GM12878 (cell line): ENCODE measurements at regions of chr1 and their contacts with region 1.

Region 1: GRCh38 chr1:25549273-25550154 is 6.1 kb downstream of the LDLRAP1 start:
- DNase-seq: peak; percentile 94
- ATAC-seq: peak; percentile 95
- H3K4me3 ChIP-seq: peak overlapping the region; percentile 49; the same call in 1 of the 2 replicates
- H3K27ac ChIP-seq: peak overlapping the region; percentile 85
- H3K4me1 ChIP-seq: peaks cover 63% of the 10 kb centered on the region
- H3K27me3 ChIP-seq: no peaks in the 10 kb centered on the region
- CTCF ChIP-seq: no peak
- EP300 ChIP-seq: peak in 1 of 2 experiments; percentile 51; a peak in 1 of 4 replicates
- POLR2A ChIP-seq: peak; percentile 59
- RAD21 ChIP-seq: no peak; the same call in 1 of the 2 replicates

Region 2: DNA sequence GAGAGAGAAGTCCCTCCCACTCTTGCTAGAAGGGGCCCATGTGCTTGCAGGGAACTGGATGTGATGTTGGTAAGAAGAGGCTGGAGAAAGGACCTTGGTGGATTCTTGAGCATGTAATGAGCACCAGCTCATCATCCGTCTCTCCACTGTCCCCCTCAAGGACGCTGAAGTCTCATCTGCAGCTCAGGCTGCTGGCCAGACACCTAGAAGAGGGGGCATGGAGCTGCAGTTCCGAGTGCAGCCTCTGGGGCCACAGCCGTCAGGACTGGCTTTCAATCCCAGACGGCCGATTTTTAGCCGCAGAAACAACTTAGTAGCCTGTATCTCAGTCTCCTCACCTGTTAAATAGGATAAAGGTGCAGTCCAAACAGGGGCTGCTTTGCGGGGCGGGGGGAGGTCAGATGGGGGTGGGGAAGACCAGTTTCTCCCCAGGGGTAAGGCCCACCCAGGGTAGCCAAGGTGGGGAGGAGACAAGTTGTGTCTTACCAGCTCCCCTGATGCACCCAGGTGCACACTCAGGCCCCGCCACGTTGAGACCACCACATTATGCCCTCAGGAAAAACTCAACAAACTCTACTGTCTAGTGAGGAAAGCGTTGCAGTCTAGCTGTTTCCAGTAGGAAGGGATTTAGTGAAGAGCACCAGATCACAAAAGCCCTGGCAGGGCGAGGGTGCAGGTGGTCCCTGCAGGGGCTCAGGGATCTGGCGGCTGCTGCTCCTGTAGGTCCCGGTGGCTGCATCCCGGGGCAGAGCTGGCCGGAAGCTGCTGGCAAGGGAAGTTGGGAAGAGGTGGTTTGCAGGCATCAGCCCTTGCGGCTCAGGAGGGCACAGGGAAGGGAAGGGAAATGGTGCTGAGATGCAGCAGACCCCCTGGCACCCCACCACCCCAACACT is 23.4 kb after region 1 on chr1:
- CTCF ChIA-PET with region 1: interaction called, 12 read pairs
- POLR2A ChIA-PET with region 1: interaction called, 4 read pairs
- RAD21 ChIA-PET with region 1: interaction called, 3 read pairs
- SMC1A ChIA-PET with region 1: interaction called, 5 read pairs
- in situ Hi-C with region 1: no loop called
- intact Hi-C with region 1: no loop called
- DNase-seq: no peak
- ATAC-seq: peak; percentile 95
- H3K4me3 ChIP-seq: no peak overlapping the region
- H3K27ac ChIP-seq: no peak overlapping the region
- H3K4me1 ChIP-seq: no peaks in the 10 kb centered on the region
- H3K27me3 ChIP-seq: no peaks in the 10 kb centered on the region
- CTCF ChIP-seq: peak; percentile 42 to 85 (median 65)
- EP300 ChIP-seq: no peak
- POLR2A ChIP-seq: no peak
- RAD21 ChIP-seq: peak; percentile 51

Region 3: GRCh38 chr1:25675729-25676476 is 126.4 kb after region 1 on chr1:
- CTCF ChIA-PET with region 1: interaction called, 3 read pairs
- POLR2A ChIA-PET with region 1: no interaction called
- RAD21 ChIA-PET with region 1: interaction called, 3 read pairs
- SMC1A ChIA-PET with region 1: interaction called, 4 read pairs
- in situ Hi-C with region 1: no loop called
- intact Hi-C with region 1: loop called (anchors 5 kb)
- DNase-seq: peak; percentile 93
- ATAC-seq: peak; percentile 98
- H3K4me3 ChIP-seq: no peak overlapping the region
- H3K27ac ChIP-seq: no peak overlapping the region
- H3K4me1 ChIP-seq: peaks cover 21% of the 10 kb centered on the region
- H3K27me3 ChIP-seq: peaks cover 3 to 15% of the 10 kb centered on the region in 2 experiments
- CTCF ChIP-seq: no peak
- EP300 ChIP-seq: peak; percentile 93 to 97
- POLR2A ChIP-seq: no peak
- RAD21 ChIP-seq: no peak

Region 4: GRCh38 chr1:25711555-25712298 is 162.2 kb after region 1 on chr1:
- CTCF ChIA-PET with region 1: no interaction called
- POLR2A ChIA-PET with region 1: no interaction called
- RAD21 ChIA-PET with region 1: no interaction called
- SMC1A ChIA-PET with region 1: no interaction called
- in situ Hi-C with region 1: no loop called
- intact Hi-C with region 1: no loop called
- DNase-seq: no peak
- ATAC-seq: peak; percentile 74
- H3K4me3 ChIP-seq: no peak overlapping the region
- H3K27ac ChIP-seq: no peak overlapping the region
- H3K4me1 ChIP-seq: no peaks in the 10 kb centered on the region
- H3K27me3 ChIP-seq: 0 out of 4 replicates have a peak, but pooled peaks cover 0 to 2% of the 10 kb centered on the region in 2 experiments
- CTCF ChIP-seq: no peak
- EP300 ChIP-seq: no peak
- POLR2A ChIP-seq: no peak
- RAD21 ChIP-seq: no peak